ENCODE measurements at regions of chrX and their contacts with region 1.

Region 1: GRCh38 chrX:65706041-65706828 is 38.8 kb downstream of the MSN start:
- DNase-seq: no peak
- ATAC-seq: peak; percentile 44
- H3K4me3 Mint-ChIP-seq: peak overlapping the region; percentile 43
- H3K27ac Mint-ChIP-seq: peak overlapping the region; percentile 76
- H3K4me1 Mint-ChIP-seq: peaks cover 70% of the 10 kb centered on the region
- H3K27me3 Mint-ChIP-seq: no peaks in the 10 kb centered on the region

Region 2: DNA sequence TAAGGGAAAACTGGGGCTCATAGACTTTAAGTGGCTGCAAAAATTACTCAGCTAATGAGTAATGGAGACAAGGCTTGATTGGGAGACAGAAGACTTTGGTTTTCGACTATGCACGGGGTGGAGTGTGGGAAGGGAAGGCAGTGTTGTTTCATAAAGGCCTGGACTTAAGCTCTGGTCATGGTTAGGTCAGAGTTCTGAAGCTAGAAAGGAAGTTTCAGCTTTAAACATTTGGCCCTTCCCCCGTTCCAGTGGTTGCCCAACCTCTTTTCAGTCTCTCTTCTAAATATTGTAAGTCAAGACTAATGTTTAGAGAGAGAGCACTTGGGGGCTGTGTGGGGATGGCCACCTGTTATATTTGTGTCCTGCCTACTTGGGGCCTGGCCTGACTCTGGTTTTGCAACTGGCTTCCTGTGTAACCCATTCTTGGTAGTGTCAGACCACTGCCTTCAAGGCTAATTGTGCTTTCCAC is 17.8 kb before region 1 on chrX:
- CTCF ChIA-PET with region 1: interaction called, 16 read pairs
- POLR2A ChIA-PET with region 1: interaction called, 3 read pairs
- DNase-seq: no peak
- ATAC-seq: no peak
- H3K4me3 Mint-ChIP-seq: peak overlapping the region; percentile 46
- H3K27ac Mint-ChIP-seq: peak overlapping the region; percentile 77
- H3K4me1 Mint-ChIP-seq: peaks cover 85% of the 10 kb centered on the region
- H3K27me3 Mint-ChIP-seq: no peaks in the 10 kb centered on the region

Region 3: GRCh38 chrX:65723706-65724105 is 17.5 kb after region 1 on chrX:
- CTCF ChIA-PET with region 1: interaction called, 13 read pairs
- POLR2A ChIA-PET with region 1: interaction called, 4 read pairs
- DNase-seq: peak; percentile 64
- ATAC-seq: peak; percentile 85
- H3K4me3 Mint-ChIP-seq: peak overlapping the region; percentile 51
- H3K27ac Mint-ChIP-seq: peak overlapping the region; percentile 92
- H3K4me1 Mint-ChIP-seq: peaks cover 91% of the 10 kb centered on the region
- H3K27me3 Mint-ChIP-seq: no peaks in the 10 kb centered on the region

Region 4: GRCh38 chrX:65755786-65756185 is 49.6 kb after region 1 on chrX:
- CTCF ChIA-PET with region 1: no interaction called
- POLR2A ChIA-PET with region 1: no interaction called
- DNase-seq: no peak
- ATAC-seq: no peak
- H3K4me3 Mint-ChIP-seq: no peak overlapping the region
- H3K27ac Mint-ChIP-seq: no peak overlapping the region
- H3K4me1 Mint-ChIP-seq: peaks cover 52% of the 10 kb centered on the region
- H3K27me3 Mint-ChIP-seq: no peaks in the 10 kb centered on the region